ENCODE measurements at regions of chr1 and their contacts with region 1.

Region 1: DNA sequence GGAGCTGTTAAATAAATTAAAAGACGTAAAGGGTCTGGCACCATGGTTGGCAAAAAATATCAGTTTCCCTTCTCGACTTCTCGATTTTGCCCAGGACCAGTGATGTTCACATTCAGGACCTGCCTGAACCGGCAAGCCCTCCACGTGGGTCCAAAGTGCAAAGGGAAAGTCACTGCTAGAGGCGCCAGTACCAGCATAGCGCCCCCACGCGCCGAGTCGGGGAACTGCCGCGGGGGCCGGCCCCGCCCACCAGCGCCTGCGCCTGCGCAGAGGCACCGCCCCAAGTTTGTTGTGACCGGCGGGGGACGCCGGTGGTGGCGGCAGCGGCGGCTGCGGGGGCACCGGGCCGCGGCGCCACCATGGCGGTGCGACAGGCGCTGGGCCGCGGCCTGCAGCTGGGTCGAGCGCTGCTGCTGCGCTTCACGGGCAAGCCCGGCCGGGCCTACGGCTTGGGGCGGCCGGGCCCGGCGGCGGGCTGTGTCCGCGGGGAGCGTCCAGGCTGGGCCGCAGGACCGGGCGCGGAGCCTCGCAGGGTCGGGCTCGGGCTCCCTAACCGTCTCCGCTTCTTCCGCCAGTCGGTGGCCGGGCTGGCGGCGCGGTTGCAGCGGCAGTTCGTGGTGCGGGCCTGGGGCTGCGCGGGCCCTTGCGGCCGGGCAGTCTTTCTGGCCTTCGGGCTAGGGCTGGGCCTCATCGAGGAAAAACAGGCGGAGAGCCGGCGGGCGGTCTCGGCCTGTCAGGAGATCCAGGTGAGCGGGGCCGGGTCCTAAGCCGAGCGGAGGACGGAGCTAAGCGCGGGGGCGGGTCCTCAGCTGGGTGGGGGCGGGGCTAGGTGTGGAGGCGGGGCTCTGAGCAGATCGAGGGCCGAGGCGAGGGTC is at the start of gene PINK1:
- H3K4me3 Mint-ChIP-seq: peak within 1 kb of the TSS; percentile 81
- H3K27ac Mint-ChIP-seq: peak within 1 kb of the TSS; percentile 67
- H3K4me1 Mint-ChIP-seq: peaks cover 9% of the 10 kb centered on the region
- H3K27me3 Mint-ChIP-seq: peaks cover 4% of the 10 kb centered on the region

Region 2: GRCh38 chr1:20265250-20265649 is 368.2 kb before region 1 on chr1:
- intact Hi-C with region 1: no loop called
- H3K4me3 Mint-ChIP-seq: no peak overlapping the region
- H3K27ac Mint-ChIP-seq: no peak overlapping the region
- H3K4me1 Mint-ChIP-seq: no peaks in the 10 kb centered on the region
- H3K27me3 Mint-ChIP-seq: peaks cover 11% of the 10 kb centered on the region

Region 3: GRCh38 chr1:20574686-20575540 is 58.5 kb before region 1 on chr1:
- intact Hi-C with region 1: loop called (anchors 1 kb)
- H3K4me3 Mint-ChIP-seq: no peak overlapping the region
- H3K27ac Mint-ChIP-seq: no peak overlapping the region
- H3K4me1 Mint-ChIP-seq: peaks cover 13% of the 10 kb centered on the region
- H3K27me3 Mint-ChIP-seq: peaks cover 37% of the 10 kb centered on the region

Measured in dendritic cell treated with granulocyte-macrophage colony-stimulating factor and Interleukin-4, amounts not matched to agents 40 ng/mL and 50 ng/mL, for 4 days (primary cell).